Endothelial cell of umbilical vein (primary cell): ENCODE measurements at regions of chr1 and their contacts with region 1.

Region 1: DNA sequence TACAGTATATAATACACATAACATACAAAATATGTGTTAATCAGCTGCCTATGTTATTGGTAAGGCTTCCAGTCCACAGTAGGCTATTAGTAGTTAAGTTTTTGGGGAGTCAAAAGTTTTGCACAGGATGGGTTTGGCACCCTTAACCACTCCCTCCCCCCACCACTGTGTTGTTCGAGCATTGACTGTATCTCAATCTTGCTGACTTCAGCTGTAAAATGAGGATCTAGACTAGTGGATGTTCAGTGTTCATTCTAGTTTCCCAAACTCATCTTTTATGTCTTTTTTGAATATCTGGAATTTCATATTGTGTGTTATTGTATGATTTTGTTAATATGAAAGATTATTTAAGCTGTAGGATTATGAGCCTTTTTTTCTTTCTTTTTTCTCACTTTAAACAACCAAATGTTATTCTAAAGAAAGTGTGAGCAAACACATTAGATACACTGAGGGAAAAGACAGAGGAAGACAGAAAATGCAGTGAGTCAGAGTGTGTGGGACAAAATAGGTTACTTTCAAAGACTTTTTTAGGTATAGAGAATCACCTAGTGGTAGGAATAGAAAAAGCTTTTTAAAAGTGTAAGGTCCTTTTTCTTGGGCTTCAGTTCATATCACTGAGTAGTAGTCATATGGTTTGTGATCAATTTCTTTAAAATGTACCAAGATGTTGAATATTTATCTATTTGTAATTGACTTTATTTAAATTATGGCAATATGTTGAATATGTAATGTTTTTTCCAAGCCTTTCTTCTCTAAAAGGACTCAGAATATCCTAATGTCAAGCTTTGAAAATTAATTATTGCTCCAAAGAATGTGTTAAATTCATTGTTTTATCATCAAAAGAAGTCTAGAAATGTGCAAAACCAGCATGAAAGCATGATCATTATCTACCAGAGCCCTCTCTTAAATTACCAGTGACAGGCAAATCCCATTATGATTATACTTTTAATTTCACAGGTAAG is 17.9 kb upstream of the CENPF start:
- DNase-seq: peak; percentile 77
- H3K4me3 ChIP-seq: no peak overlapping the region
- H3K27ac ChIP-seq: no peak overlapping the region
- H3K4me1 ChIP-seq: peaks cover 14% of the 10 kb centered on the region
- H3K27me3 ChIP-seq: no peaks in the 10 kb centered on the region
- CTCF ChIP-seq: peak; percentile 50 to 62
- POLR2A ChIP-seq: no peak

Region 2: GRCh38 chr1:214213136-214213535 is 371.9 kb before region 1 on chr1:
- CTCF ChIA-PET with region 1: interaction called, 10 read pairs
- POLR2A ChIA-PET with region 1: no interaction called
- dilution Hi-C with region 1: no loop called
- intact Hi-C with region 1: loop called (anchors 1 kb)
- DNase-seq: no peak
- H3K4me3 ChIP-seq: no peak overlapping the region
- H3K27ac ChIP-seq: no peak overlapping the region
- H3K4me1 ChIP-seq: peaks cover 7% of the 10 kb centered on the region
- H3K27me3 ChIP-seq: peaks cover 6 to 16% of the 10 kb centered on the region in 2 experiments
- CTCF ChIP-seq: no peak
- POLR2A ChIP-seq: no peak

Region 3: GRCh38 chr1:214224611-214225354 is 360.3 kb before region 1 on chr1:
- CTCF ChIA-PET with region 1: no interaction called
- POLR2A ChIA-PET with region 1: no interaction called
- dilution Hi-C with region 1: no loop called
- intact Hi-C with region 1: no loop called
- DNase-seq: peak; percentile 31
- H3K4me3 ChIP-seq: peak overlapping the region; percentile 25 to 73 (median 48)
- H3K27ac ChIP-seq: no peak overlapping the region
- H3K4me1 ChIP-seq: peaks cover 7% of the 10 kb centered on the region
- H3K27me3 ChIP-seq: peaks cover 2 to 6% of the 10 kb centered on the region in 2 experiments
- CTCF ChIP-seq: no peak
- POLR2A ChIP-seq: no peak

Region 4: GRCh38 chr1:214349781-214350180 is 235.3 kb before region 1 on chr1:
- CTCF ChIA-PET with region 1: interaction called, 10 read pairs
- POLR2A ChIA-PET with region 1: no interaction called
- dilution Hi-C with region 1: loop called (anchors 25 kb)
- intact Hi-C with region 1: no loop called
- DNase-seq: no peak
- H3K4me3 ChIP-seq: no peak overlapping the region
- H3K27ac ChIP-seq: no peak overlapping the region
- H3K4me1 ChIP-seq: no peaks in the 10 kb centered on the region
- H3K27me3 ChIP-seq: no peaks in the 10 kb centered on the region
- CTCF ChIP-seq: no peak
- POLR2A ChIP-seq: no peak

Region 5: GRCh38 chr1:214386747-214387146 is 198.3 kb before region 1 on chr1:
- CTCF ChIA-PET with region 1: interaction called, 124 read pairs
- POLR2A ChIA-PET with region 1: interaction called, 3 read pairs
- dilution Hi-C with region 1: no loop called
- intact Hi-C with region 1: loop called (anchors 1 kb)
- DNase-seq: no peak
- H3K4me3 ChIP-seq: no peak overlapping the region
- H3K27ac ChIP-seq: no peak overlapping the region
- H3K4me1 ChIP-seq: no peaks in the 10 kb centered on the region
- H3K27me3 ChIP-seq: no peaks in the 10 kb centered on the region
- CTCF ChIP-seq: no peak
- POLR2A ChIP-seq: no peak

Region 6: GRCh38 chr1:214494706-214495105 is 90.4 kb before region 1 on chr1:
- CTCF ChIA-PET with region 1: interaction called, 12 read pairs
- POLR2A ChIA-PET with region 1: no interaction called
- dilution Hi-C with region 1: no loop called
- intact Hi-C with region 1: no loop called
- DNase-seq: no peak
- H3K4me3 ChIP-seq: no peak overlapping the region
- H3K27ac ChIP-seq: no peak overlapping the region
- H3K4me1 ChIP-seq: peaks cover 19% of the 10 kb centered on the region
- H3K27me3 ChIP-seq: no peaks in the 10 kb centered on the region
- CTCF ChIP-seq: no peak
- POLR2A ChIP-seq: no peak

Region 7: GRCh38 chr1:214632091-214632490 is 47.0 kb after region 1 on chr1:
- CTCF ChIA-PET with region 1: interaction called, 19 read pairs
- POLR2A ChIA-PET with region 1: no interaction called
- dilution Hi-C with region 1: no loop called
- intact Hi-C with region 1: no loop called
- DNase-seq: no peak
- H3K4me3 ChIP-seq: no peak overlapping the region
- H3K27ac ChIP-seq: no peak overlapping the region
- H3K4me1 ChIP-seq: no peaks in the 10 kb centered on the region
- H3K27me3 ChIP-seq: no peaks in the 10 kb centered on the region
- CTCF ChIP-seq: no peak
- POLR2A ChIP-seq: no peak